Sigmoid colon (tissue), 7 donors: ENCODE measurements at regions of chr6 and their contacts with region 1.

Region 1: DNA sequence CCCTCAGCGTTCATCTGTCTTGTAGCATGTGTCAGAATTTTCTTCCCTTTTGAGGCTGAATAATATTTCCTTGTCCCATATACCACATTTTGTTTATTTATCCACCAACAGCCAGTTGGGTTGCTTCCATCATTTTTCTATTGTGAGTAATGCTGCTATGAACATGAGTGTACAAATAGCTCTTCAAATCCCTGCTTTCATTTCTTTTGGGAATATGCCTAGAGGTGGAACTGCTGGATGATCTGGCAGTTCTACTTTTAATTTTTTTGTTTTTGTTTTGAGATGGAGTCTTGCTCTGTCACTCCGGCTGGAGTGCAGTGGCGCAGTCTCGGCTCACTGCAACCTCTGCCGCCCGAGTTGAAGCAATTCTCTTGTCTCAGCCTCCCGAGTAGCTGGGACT is 64.7 kb downstream of the SASH1 start:
- DNase-seq: no peak
- H3K4me3 ChIP-seq: no peak overlapping the region
- H3K27ac ChIP-seq: peak overlapping the region; percentile 19 to 77 (median 66)
- H3K4me1 ChIP-seq: peaks cover 0 to 24% (median 19%) of the 10 kb centered on the region in 4 donors
- H3K27me3 ChIP-seq: no peaks in the 10 kb centered on the region
- CTCF ChIP-seq: no peak
- EP300 ChIP-seq: no peak
- POLR2A ChIP-seq: no peak

Region 2: GRCh38 chr6:148342357-148343046 is 64.9 kb before region 1 on chr6 and contains the start of gene SASH1:
- intact Hi-C with region 1: loop called (anchors 5 kb)
- DNase-seq: peak; percentile 84
- H3K4me3 ChIP-seq: peak within 1 kb of the TSS; percentile 64 to 80 (median 72)
- H3K27ac ChIP-seq: peak within 1 kb of the TSS; percentile 82 to 85 (median 84)
- H3K4me1 ChIP-seq: peaks cover 0 to 37% (median 28%) of the 10 kb centered on the region in 4 donors
- H3K27me3 ChIP-seq: no peaks in the 10 kb centered on the region
- CTCF ChIP-seq: no peak
- EP300 ChIP-seq: no peak
- POLR2A ChIP-seq: peak in 1 of 2 donors; percentile 26
- total RNA-seq, gene SASH1: 40.5 to 101 (median 61.3) TPM